Lower lobe of right lung (tissue), 2 donors: ENCODE measurements at regions of chr1 and their contacts with region 1.

Region 1: GRCh38 chr1:15994590-15995351 is 9.3 kb upstream of the SRARP start:
- DNase-seq: peak; percentile 73
- ATAC-seq: peak; percentile 85 to 87
- H3K4me3 ChIP-seq: no peak overlapping the region
- H3K27ac ChIP-seq: no peak overlapping the region
- H3K4me1 ChIP-seq: no peaks in the 10 kb centered on the region
- H3K27me3 ChIP-seq: no peaks in the 10 kb centered on the region
- CTCF ChIP-seq: peak; percentile 92

Region 2: GRCh38 chr1:15810073-15810472 is 184.7 kb before region 1 on chr1:
- intact Hi-C with region 1: loop called (anchors 10 kb)
- DNase-seq: no peak
- ATAC-seq: no peak
- H3K4me3 ChIP-seq: no peak overlapping the region
- H3K27ac ChIP-seq: no peak overlapping the region
- H3K4me1 ChIP-seq: no peaks in the 10 kb centered on the region
- H3K27me3 ChIP-seq: no peaks in the 10 kb centered on the region
- CTCF ChIP-seq: no peak